ENCODE measurements at regions of chr15 and their contacts with region 1.

Region 1: DNA sequence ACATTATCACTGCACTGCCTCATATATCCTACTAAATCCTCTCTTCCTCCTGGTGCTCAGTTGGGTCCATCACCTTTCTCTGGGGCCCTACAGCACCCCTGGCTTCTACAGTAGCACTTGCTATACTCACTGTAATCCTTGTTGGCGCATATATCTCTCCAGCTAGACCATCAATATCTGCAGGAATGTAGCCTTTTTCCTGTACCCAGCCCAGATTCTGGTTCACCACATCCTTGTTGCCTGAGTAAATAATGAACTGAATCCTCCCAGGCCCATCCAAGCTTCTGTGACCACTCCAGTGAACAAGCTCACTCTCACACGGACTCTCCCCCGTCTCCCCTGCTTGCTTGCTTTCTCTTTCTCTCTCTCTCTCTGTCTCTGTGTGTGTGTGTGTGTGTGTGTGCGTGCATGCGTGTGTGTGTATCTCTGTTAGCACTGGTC is 62.5 kb upstream of the LIPC start:
- DNase-seq: no peak
- ATAC-seq: no peak
- H3K4me3 ChIP-seq: no peak overlapping the region
- H3K4me3 Mint-ChIP-seq: no peak overlapping the region
- H3K27ac ChIP-seq: no peak overlapping the region
- H3K27ac Mint-ChIP-seq: no peak overlapping the region
- H3K4me1 ChIP-seq: no peaks in the 10 kb centered on the region
- H3K4me1 Mint-ChIP-seq: no peaks in the 10 kb centered on the region
- H3K27me3 ChIP-seq: no peaks in the 10 kb centered on the region
- H3K27me3 Mint-ChIP-seq: peaks cover 5% of the 10 kb centered on the region
- CTCF ChIP-seq: no peak

Region 2: DNA sequence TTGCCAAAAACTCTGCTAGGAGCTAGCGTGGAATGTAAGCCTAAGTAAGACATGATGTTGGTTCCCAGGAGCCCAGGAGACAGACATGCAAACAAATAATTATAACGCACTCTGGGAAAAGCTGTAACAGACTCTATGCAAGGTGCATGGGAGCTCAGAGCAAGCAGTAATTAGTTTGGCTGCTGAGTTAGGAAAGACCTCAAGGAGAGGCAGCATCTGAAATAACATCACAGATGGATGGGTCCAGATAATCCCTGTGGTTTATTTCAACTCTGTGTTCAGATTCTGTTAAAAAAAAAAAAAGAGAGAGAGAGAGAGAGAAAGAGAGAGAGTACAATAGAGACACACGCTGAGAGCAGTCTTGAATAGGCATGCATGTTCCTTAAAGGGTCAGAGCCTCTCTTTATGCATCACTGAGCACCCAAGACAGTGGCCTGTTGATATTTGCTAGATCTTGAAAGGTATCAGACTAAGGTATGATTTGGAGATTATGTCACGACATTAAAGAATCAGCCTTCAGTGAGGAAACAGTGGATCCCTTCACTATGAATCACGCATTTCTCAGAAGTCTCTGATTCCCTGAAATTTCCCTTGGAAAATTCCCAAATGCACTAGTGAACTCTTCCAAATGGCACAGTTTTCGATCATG is 61.8 kb before region 1 on chr15:
- CTCF ChIA-PET with region 1: no interaction called
- POLR2A ChIA-PET with region 1: no interaction called
- intact Hi-C with region 1: loop called (anchors 10 kb)
- DNase-seq: no peak
- ATAC-seq: no peak
- H3K4me3 ChIP-seq: no peak overlapping the region
- H3K4me3 Mint-ChIP-seq: no peak overlapping the region
- H3K27ac ChIP-seq: no peak overlapping the region
- H3K27ac Mint-ChIP-seq: no peak overlapping the region
- H3K4me1 ChIP-seq: no peaks in the 10 kb centered on the region
- H3K4me1 Mint-ChIP-seq: no peaks in the 10 kb centered on the region
- H3K27me3 ChIP-seq: no peaks in the 10 kb centered on the region
- H3K27me3 Mint-ChIP-seq: peaks cover 13% of the 10 kb centered on the region
- CTCF ChIP-seq: no peak

Region 3: GRCh38 chr15:58396181-58396580 is 26.9 kb after region 1 on chr15:
- CTCF ChIA-PET with region 1: no interaction called
- POLR2A ChIA-PET with region 1: no interaction called
- intact Hi-C with region 1: no loop called
- DNase-seq: no peak
- ATAC-seq: no peak
- H3K4me3 ChIP-seq: no peak overlapping the region
- H3K4me3 Mint-ChIP-seq: no peak overlapping the region
- H3K27ac ChIP-seq: no peak overlapping the region
- H3K27ac Mint-ChIP-seq: no peak overlapping the region
- H3K4me1 ChIP-seq: no peaks in the 10 kb centered on the region
- H3K4me1 Mint-ChIP-seq: no peaks in the 10 kb centered on the region
- H3K27me3 ChIP-seq: no peaks in the 10 kb centered on the region
- H3K27me3 Mint-ChIP-seq: peaks cover 6% of the 10 kb centered on the region
- CTCF ChIP-seq: no peak

Measured in B cell (primary cell).